Activated T-helper 1 cell treated with anti-CD3 and anti-CD28 coated beads, Interleukin-12 subunit alpha, Interleukin-12 subunit beta, Interleukin-2, Interleukin-4 antibody, amounts not matched to agents 30 ng/mL and 10 ng/mL and 1 ng/mL, durations not matched to agents 14 hours and 24 hours and 36 hours (primary cell): ENCODE measurements at regions of chr3 and their contacts with region 1.

Region 1: DNA sequence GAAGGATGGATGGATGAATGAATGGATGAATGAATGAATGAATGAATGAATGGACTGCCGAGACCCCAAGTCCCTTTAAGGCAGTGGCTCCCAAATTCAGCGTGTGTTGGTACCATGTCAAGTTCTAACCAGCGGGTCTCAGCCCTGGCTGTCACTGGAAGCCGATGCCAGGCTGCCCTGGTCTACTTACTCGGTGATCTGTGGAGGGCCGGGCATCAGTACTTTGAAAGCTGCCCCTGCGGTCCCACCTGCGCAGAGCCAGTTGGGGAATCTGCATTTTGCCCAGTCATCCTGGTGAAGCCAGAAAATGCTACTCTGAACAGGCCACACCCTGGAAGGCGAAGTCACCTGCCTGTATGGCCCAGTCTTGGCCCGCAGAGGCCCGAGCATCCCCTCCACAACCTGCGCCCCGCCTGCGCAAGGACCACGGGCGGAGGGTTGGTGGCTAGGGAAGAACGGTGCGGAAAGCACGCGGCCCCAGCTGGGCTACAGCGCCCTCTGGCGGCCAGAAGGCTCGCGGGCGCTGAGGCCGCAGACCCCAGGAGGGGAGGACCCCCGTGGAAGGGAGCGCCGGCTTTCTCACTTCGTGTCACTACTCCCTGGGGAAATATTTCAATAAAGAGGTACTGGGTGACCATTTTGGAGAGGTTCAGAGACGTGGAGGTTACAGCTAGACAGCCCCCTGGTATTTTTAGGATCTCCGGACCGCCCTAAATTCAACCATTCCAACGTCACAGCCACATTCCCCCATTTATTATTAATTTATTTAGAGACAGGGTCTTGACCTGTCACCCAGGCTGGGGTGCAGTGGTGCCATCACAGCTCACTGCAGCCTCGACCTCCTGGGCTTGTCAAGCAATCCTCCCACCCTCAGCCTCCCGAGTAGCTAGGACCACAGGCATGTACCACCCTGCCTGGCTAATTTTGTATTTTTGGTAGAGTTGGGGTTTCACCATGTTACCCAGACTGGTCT is 34.9 kb downstream of the PRKCD start:
- DNase-seq: peak; percentile 48
- H3K4me3 Mint-ChIP-seq: no peak overlapping the region
- H3K27ac Mint-ChIP-seq: peak overlapping the region; percentile 56
- H3K4me1 Mint-ChIP-seq: peaks cover 11% of the 10 kb centered on the region
- H3K27me3 Mint-ChIP-seq: peaks cover 2% of the 10 kb centered on the region

Region 2: DNA sequence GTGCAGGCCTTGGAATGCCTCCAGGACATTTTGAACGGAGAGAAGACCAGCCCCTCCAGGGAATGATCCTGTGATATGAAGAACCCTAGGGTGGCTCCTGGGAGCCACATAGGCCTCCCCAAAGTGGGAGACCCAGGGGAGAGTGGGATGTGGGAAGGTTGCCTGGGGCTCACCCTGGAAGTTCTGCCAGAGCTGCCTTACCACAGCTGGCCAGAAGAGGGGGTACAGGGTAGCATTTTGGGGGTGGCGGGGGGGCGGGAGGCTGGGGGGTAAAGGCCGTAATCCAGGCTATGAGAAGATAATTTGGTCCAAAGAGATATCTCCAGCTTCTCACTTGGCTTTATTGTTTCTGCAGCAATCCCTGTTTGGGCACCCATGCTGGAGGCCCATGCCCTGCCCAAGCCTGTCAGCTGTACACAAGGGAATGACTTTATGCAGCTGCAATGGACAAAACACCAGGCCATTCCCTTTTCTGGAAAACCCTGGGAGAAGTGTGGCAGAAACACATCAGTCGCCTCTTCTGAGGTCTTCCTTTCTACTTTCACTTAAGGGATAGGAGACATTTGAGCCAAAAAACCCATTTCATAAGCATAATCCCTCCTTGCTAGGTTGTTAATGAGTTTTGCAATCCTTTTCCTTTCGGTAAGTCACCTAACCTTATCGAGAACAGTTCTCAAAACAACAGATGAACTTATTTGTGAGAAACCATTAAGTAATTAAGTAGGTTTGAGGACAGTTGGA is 350.0 kb before region 1 on chr3:
- intact Hi-C with region 1: loop called (anchors 10 kb)
- DNase-seq: no peak
- H3K4me3 Mint-ChIP-seq: no peak overlapping the region
- H3K27ac Mint-ChIP-seq: no peak overlapping the region
- H3K4me1 Mint-ChIP-seq: peaks cover 17% of the 10 kb centered on the region
- H3K27me3 Mint-ChIP-seq: no peaks in the 10 kb centered on the region

Region 3: GRCh38 chr3:53160660-53161449 is 35.0 kb before region 1 on chr3 and contains the start of gene PRKCD:
- intact Hi-C with region 1: loop called (anchors 1 kb)
- DNase-seq: peak; percentile 67
- H3K4me3 Mint-ChIP-seq: peak within 1 kb of the TSS; percentile 89
- H3K27ac Mint-ChIP-seq: peak within 1 kb of the TSS; percentile 89
- H3K4me1 Mint-ChIP-seq: peaks cover 32% of the 10 kb centered on the region
- H3K27me3 Mint-ChIP-seq: peaks cover 18% of the 10 kb centered on the region
- total RNA-seq, gene PRKCD: 24.8 and 28.0 TPM in 2 replicates